SK-N-SH (cell line): ENCODE measurements at regions of chr17 and their contacts with region 1.

Region 1: DNA sequence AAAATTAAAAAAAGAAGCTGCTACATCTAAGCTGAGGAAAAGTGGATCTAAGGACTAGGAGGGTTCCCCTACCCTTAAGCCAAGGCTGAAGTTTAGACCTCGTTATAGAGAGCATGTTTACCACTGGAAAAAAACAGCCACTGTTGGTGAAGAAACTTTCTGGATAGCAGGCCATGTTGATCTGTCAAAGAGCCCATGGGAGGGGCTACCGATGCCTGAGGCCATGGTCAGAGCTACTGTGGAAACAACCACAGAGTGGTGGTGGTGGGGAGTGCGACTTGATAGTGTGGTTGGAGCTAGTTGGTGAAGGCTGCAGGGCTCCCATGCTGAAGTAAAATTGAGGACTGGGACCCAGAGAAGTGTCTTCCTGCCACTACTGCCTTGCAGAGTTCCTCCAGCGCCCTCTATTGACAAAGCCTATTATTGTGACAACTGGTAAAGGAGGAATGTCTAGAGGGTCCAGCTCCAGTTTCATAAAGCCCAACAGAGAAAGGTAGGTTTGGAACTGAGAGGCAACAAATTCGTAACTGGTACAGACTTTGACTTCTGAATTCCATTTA is 12.7 kb upstream of the FAM20A start:
- DNase-seq: peak; percentile 46
- H3K4me3 ChIP-seq: no peak overlapping the region
- H3K27ac ChIP-seq: no peak overlapping the region
- H3K4me1 ChIP-seq: no peaks in the 10 kb centered on the region
- H3K27me3 ChIP-seq: no peaks in the 10 kb centered on the region
- CTCF ChIP-seq: peak; percentile 52
- EP300 ChIP-seq: no peak
- RAD21 ChIP-seq: peak; percentile 65

Region 2: GRCh38 chr17:68600067-68600930 is 13.5 kb before region 1 on chr17:
- CTCF ChIA-PET with region 1: interaction called, 19 read pairs
- POLR2A ChIA-PET with region 1: no interaction called
- DNase-seq: peak; percentile 78
- H3K4me3 ChIP-seq: peak overlapping the region; percentile 37 to 41
- H3K27ac ChIP-seq: no peak overlapping the region
- H3K4me1 ChIP-seq: peaks cover 0 to 9% of the 10 kb centered on the region in 2 experiments; a peak in 1 of 4 replicates
- H3K27me3 ChIP-seq: peaks cover 51% of the 10 kb centered on the region
- CTCF ChIP-seq: no peak
- EP300 ChIP-seq: no peak
- RAD21 ChIP-seq: no peak

Region 3: DNA sequence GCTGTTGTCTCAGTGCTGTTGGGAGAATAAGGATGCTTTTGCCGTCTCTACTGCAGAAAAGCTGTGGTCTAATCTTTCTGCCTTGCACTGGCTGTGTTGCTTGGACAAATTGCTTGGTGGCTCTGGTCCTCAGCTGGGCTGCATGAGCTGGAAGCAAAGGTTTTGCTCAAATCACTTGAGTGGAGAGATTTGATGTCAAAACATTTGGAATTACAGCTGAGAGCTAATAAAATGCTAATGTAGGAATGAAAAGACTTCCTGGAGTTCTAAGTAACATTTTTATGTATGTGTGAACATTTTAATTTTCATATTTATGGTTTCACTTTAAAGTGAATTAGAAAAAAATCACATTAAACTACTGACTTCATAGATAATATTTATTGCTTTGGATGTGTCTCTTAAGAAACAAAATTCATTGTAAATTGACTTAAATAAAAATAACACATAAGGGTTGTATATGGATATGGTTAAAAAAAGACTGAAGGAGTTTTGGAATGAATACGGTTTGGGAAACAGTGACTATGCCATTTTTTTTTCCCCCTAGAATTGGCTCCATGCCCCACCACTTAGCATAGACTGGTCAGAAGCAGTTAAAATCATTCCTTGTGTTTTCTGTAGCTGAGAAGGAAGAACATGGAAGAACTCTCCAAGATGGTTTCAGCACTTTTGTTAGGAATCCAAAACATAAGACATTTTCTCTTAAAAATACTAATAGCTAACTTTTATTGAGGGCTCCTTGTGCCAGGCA is 26.6 kb after region 1 on chr17:
- CTCF ChIA-PET with region 1: interaction called, 13 read pairs
- POLR2A ChIA-PET with region 1: no interaction called
- DNase-seq: no peak
- H3K4me3 ChIP-seq: no peak overlapping the region
- H3K27ac ChIP-seq: no peak overlapping the region
- H3K4me1 ChIP-seq: no peaks in the 10 kb centered on the region
- H3K27me3 ChIP-seq: no peaks in the 10 kb centered on the region
- CTCF ChIP-seq: no peak
- EP300 ChIP-seq: no peak
- RAD21 ChIP-seq: no peak